CD14-positive monocyte (primary cell): ENCODE measurements at regions of chr17 and their contacts with region 1.

Region 1: DNA sequence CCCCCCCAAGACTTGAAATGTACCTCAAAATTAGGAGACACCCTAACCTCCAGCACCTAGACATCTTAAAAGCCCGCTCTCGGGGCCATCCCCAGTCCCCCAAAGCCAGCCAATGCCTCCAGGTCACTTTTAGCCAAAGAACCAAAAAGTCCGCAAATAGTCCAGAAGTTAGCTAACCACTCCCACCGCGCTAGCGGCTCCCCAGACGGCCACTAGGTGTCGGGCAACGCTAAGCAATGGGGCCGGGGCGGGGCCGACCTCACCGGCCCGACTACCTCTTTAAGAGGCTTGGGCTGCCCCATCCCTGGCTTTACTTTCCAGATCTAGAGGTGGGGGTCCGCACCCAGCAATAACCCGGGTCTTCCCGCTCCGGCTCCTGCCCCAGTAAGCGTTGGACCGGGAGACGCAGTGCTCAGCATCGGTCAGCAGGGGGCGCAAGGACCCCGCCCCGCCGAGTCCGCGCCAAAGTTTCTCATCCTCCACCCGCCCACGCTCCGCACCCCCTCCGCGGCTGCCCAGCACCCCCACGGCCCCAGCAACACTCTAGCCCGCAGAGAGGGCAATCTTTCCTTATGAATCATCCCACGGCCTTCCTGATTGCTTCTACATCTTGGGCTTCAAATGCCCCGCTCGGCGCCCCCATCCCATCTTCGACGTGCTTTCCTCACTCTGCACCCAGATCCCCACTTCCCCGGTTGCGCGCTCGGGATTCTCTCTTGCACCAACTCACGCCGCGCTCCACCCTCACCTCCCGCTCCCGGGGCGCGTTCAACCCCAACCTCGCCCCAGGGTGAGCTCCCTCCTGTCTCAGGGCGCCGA is 765 bp downstream of the COL1A1 start:
- DNase-seq: peak; percentile 76 to 82 (median 77)
- H3K4me3 ChIP-seq: peak overlapping the region; percentile 7 to 77 (median 43)
- H3K4me3 Mint-ChIP-seq: peak overlapping the region; percentile 77 to 90
- H3K27ac ChIP-seq: no peak overlapping the region
- H3K27ac Mint-ChIP-seq: peak overlapping the region in 4 of 7 donors; percentile 62 to 79 (median 70)
- H3K4me1 ChIP-seq: peaks cover 17 to 20% of the 10 kb centered on the region in 2 donors
- H3K4me1 Mint-ChIP-seq: peaks cover 19% of the 10 kb centered on the region
- H3K27me3 ChIP-seq: peaks cover 18 to 54% of the 10 kb centered on the region in 2 donors
- H3K27me3 Mint-ChIP-seq: peaks cover 62 to 84% (median 65%) of the 10 kb centered on the region in 3 donors
- CTCF ChIP-seq: peak; percentile 100

Region 2: DNA sequence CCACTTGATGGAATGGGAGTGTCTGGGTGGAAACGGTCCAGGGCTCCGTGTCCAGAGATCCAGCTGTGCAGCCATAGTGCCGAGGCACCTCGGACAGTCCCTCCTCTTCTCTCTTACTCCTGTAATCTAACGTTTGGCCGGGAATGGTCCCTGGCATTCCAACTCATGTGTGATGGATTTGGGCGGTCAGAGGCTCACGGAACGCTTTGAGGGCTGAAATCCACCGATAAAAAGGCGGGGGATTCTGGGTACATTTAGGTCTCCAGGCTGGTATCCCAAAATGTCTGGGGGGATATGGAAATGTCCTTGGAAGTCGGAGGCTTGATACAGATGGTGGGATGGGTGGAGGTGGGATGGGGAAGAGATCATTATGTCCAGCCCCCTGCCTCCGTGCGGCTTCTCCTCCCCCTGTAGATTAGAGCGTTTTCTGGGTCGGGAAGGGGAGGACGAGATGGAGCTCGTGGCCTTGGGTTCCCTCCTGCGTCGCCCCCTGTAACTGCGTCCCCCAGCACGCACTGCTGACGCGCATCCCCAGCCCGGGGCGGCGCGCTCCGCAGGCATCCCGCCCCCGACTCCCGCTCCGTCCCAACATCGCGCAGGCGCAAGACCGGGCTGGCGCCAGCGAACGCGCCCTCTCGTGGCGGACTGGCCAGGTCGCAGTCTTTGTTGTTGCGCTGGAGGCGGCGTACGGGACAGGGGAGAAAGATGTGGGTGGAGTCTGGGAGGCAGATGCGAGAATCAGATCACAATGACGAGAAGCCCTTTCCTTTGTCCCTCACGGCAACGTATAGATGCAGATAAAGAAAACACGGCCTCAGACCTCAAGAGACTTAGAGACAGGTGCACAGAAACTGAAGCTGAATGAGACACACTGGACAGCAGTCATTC is 39.4 kb before region 1 on chr17:
- intact Hi-C with region 1: loop called in 1 of 2 experiments (anchors 5 kb)
- DNase-seq: peak; percentile 84 to 85 (median 84)
- H3K4me3 ChIP-seq: peak overlapping the region; percentile 44 to 72 (median 50)
- H3K4me3 Mint-ChIP-seq: peak overlapping the region; percentile 69 to 89
- H3K27ac ChIP-seq: no peak overlapping the region
- H3K27ac Mint-ChIP-seq: peak overlapping the region in 2 of 7 donors; percentile 48 to 63
- H3K4me1 ChIP-seq: peaks cover 16 to 23% of the 10 kb centered on the region in 2 donors
- H3K4me1 Mint-ChIP-seq: peaks cover 26% of the 10 kb centered on the region
- H3K27me3 ChIP-seq: peaks cover 4 to 9% of the 10 kb centered on the region in 2 donors
- H3K27me3 Mint-ChIP-seq: peaks cover 9 to 32% (median 20%) of the 10 kb centered on the region in 3 donors
- CTCF ChIP-seq: peak; percentile 90

Region 3: DNA sequence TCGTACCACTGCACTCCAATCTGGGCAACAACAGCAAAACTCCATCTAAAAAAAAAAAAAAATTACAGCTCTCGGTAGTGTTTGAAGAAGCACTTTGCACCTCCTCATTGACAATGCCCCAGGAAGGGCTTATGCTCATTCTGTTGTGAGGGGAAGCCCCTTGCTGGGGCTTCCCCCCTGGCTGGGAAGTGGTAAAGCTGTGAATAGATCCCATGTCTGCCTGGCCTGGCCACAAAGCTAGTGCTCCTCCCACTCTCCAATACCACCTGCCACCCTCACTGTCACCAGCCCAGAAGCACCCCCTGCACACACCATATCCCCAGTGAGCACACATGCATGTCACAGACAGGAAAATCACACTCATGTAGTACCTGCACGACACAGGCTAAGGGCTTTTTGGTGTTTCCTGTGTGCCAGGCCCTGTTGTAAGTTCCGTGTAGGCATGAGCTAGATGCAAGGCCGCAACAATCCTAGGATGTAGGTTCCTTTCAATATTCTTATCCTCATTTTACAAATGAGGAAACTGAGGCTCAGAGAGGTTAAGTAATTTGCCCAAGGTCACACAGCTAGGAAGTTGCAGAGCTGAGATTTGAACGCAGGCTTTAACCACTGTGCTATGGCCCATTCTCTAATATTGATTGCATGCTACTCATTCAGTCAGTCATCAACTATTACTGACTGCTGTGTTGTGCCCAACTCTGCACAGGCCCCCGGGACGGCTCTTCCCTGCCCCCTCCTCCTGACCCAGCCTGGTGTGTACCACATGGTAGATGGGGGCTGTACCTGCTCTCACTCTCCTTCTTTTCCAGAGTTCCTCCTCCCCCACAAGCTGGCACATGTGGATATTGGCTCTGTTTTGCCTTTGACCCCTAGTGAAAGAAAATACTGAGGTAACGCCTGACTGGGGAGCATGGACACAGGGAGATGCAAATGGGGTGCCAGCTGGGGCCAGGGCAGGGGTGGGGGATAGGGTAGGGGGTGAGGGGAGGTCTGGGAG is 12.7 kb after region 1 on chr17:
- intact Hi-C with region 1: no loop called
- DNase-seq: no peak
- H3K4me3 ChIP-seq: no peak overlapping the region
- H3K4me3 Mint-ChIP-seq: no peak overlapping the region
- H3K27ac ChIP-seq: no peak overlapping the region
- H3K27ac Mint-ChIP-seq: peak overlapping the region in 1 of 7 donors; percentile 12
- H3K4me1 ChIP-seq: no peaks in the 10 kb centered on the region
- H3K4me1 Mint-ChIP-seq: peaks cover 4% of the 10 kb centered on the region
- H3K27me3 ChIP-seq: peaks cover 0 to 8% of the 10 kb centered on the region in 2 donors
- H3K27me3 Mint-ChIP-seq: peaks cover 4 to 21% (median 12%) of the 10 kb centered on the region in 3 donors
- CTCF ChIP-seq: no peak

Region 4: GRCh38 chr17:50269477-50270434 is 69.1 kb after region 1 on chr17:
- intact Hi-C with region 1: loop called in 1 of 2 experiments (anchors 2 kb)
- DNase-seq: peak; percentile 50 to 75 (median 61)
- H3K4me3 ChIP-seq: no peak overlapping the region
- H3K4me3 Mint-ChIP-seq: no peak overlapping the region
- H3K27ac ChIP-seq: no peak overlapping the region
- H3K27ac Mint-ChIP-seq: no peak overlapping the region
- H3K4me1 ChIP-seq: peaks cover 22 to 26% of the 10 kb centered on the region in 2 donors
- H3K4me1 Mint-ChIP-seq: peaks cover 25% of the 10 kb centered on the region
- H3K27me3 ChIP-seq: peaks cover 0 to 19% of the 10 kb centered on the region in 2 donors
- H3K27me3 Mint-ChIP-seq: peaks cover 19 to 35% (median 20%) of the 10 kb centered on the region in 3 donors
- CTCF ChIP-seq: peak; percentile 76

Region 5: GRCh38 chr17:50297407-50297865 is 96.8 kb after region 1 on chr17:
- intact Hi-C with region 1: loop called (anchors 1 kb)
- DNase-seq: peak; percentile 58 to 75 (median 67)
- H3K4me3 ChIP-seq: no peak overlapping the region
- H3K4me3 Mint-ChIP-seq: no peak overlapping the region
- H3K27ac ChIP-seq: no peak overlapping the region
- H3K27ac Mint-ChIP-seq: no peak overlapping the region
- H3K4me1 ChIP-seq: peaks cover 7 to 10% of the 10 kb centered on the region in 2 donors
- H3K4me1 Mint-ChIP-seq: peaks cover 15% of the 10 kb centered on the region
- H3K27me3 ChIP-seq: no peaks in the 10 kb centered on the region
- H3K27me3 Mint-ChIP-seq: peaks cover 0 to 2% (median 1%) of the 10 kb centered on the region in 3 donors
- CTCF ChIP-seq: peak; percentile 99

Region 6: DNA sequence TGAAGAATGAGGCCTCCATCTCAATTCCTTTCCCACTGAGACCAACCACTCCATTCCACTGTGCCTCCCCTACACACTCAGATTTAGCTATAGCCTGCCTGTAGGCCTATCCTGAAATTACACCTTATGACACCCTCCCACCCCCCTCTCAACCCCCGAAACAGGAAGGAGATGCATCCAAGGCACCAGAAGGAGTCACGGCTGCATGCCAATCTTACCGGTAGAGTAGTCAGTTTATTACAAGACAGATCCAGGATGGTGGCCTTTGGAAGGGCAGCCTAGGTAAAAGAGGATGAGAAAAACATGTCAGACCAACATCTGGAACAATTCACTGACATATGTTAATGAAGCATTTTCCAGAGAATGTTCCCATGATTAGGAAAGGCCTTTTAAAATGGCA is 194.0 kb after region 1 on chr17:
- intact Hi-C with region 1: no loop called
- DNase-seq: no peak
- H3K4me3 ChIP-seq: no peak overlapping the region
- H3K4me3 Mint-ChIP-seq: no peak overlapping the region
- H3K27ac ChIP-seq: peak overlapping the region in 1 of 2 donors; percentile 13
- H3K27ac Mint-ChIP-seq: peak overlapping the region in 3 of 7 donors; percentile 13 to 46 (median 29)
- H3K4me1 ChIP-seq: peaks cover 25 to 29% of the 10 kb centered on the region in 2 donors
- H3K4me1 Mint-ChIP-seq: peaks cover 33% of the 10 kb centered on the region
- H3K27me3 ChIP-seq: no peaks in the 10 kb centered on the region
- H3K27me3 Mint-ChIP-seq: peaks cover 0 to 6% (median 0%) of the 10 kb centered on the region in 3 donors
- CTCF ChIP-seq: no peak